Activated naive CD4-positive, alpha-beta T cell treated with anti-CD3 and anti-CD28 coated beads, Interleukin-2, amount 10 ng/mL, durations not matched to agents 7 days and 5 days (primary cell): ENCODE measurements at regions of chr19 and their contacts with region 1.

Region 1: GRCh38 chr19:45643024-45643926 is 4.1 kb upstream of the EML2 start:
- DNase-seq: peak; percentile 92
- H3K4me3 Mint-ChIP-seq: peak overlapping the region; percentile 54
- H3K27ac Mint-ChIP-seq: peak overlapping the region; percentile 97
- H3K4me1 Mint-ChIP-seq: peaks cover 65% of the 10 kb centered on the region
- H3K27me3 Mint-ChIP-seq: peaks cover 29% of the 10 kb centered on the region

Region 2: DNA sequence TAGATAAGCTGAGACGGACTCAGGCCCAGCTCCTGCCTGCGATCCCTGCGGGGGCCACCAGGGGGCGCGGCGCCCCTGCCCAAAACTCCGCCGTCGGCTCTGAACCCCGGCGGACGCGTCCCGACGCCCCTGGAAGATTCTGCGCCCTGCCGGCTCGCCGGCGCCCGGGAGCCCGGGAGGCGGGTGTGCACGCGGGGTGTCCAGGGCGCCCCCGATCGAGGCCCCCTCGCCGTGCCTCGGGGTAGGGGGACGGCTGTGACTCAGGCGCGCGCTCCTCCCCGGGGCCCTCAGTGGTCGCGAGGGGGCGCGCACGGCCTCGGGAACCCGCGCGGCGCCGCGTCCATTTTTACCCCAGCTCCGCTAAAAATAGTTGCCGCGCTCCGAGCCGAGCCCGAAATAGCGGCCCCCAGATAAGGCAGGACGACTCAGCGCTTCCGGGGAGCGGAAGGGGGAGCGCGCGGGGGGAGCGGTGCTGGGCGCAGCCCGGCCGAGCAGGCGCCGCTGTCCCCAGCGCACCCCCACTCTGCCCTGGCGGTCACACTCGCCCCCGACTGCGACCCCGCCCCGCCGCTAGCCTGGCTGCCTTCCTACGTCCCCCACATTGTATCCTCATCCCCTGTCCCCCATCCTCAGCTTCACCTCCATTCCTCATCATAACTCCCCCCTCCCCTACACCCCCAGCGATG is 203.6 kb before region 1 on chr19:
- CTCF ChIA-PET with region 1: interaction called, 14 read pairs
- DNase-seq: peak; percentile 87
- H3K4me3 Mint-ChIP-seq: peak overlapping the region; percentile 64
- H3K27ac Mint-ChIP-seq: peak overlapping the region; percentile 67
- H3K4me1 Mint-ChIP-seq: peaks cover 41% of the 10 kb centered on the region
- H3K27me3 Mint-ChIP-seq: peaks cover 21% of the 10 kb centered on the region

Region 3: DNA sequence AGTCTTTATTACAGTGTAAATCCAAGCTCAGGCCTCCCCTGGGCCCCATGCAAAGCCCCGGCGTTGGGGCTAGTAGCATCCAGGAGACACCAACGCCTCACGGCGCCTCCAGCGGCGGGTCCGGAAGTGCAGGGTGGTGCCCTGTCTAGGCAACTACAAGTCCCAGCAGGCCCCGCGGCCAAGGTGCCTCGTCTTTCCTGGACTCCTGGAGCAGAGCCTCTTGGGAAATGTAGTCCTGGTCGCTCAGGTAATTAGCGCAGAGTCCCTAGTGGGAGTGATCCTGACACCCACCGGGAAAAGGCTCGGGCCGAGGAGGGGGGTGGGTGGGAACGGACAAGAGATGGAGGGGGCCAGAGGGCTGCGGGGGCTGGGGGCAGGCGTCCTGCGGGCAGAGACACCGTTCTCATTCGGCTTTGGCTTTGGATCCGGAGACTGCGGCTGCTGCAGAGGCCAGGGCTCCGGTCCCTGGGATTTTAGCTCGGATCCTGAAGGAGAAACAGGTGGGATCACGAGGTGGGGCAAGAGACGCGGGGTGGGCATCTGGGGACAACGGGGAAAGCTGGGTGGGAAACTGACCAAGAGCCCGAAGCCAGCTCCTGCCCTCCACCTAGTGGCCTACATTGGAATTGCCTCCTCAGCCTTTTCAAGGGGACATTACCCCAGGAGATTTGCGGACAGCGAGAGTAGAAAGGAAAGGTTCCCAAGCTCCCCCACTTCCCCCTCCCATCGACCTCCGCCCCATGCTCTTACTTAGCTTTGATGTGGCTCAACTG is 157.8 kb before region 1 on chr19:
- CTCF ChIA-PET with region 1: interaction called, 12 read pairs
- DNase-seq: peak; percentile 99
- H3K4me3 Mint-ChIP-seq: peak overlapping the region; percentile 89
- H3K27ac Mint-ChIP-seq: peak overlapping the region; percentile 83
- H3K4me1 Mint-ChIP-seq: peaks cover 16% of the 10 kb centered on the region
- H3K27me3 Mint-ChIP-seq: peaks cover 31% of the 10 kb centered on the region

Region 4: DNA sequence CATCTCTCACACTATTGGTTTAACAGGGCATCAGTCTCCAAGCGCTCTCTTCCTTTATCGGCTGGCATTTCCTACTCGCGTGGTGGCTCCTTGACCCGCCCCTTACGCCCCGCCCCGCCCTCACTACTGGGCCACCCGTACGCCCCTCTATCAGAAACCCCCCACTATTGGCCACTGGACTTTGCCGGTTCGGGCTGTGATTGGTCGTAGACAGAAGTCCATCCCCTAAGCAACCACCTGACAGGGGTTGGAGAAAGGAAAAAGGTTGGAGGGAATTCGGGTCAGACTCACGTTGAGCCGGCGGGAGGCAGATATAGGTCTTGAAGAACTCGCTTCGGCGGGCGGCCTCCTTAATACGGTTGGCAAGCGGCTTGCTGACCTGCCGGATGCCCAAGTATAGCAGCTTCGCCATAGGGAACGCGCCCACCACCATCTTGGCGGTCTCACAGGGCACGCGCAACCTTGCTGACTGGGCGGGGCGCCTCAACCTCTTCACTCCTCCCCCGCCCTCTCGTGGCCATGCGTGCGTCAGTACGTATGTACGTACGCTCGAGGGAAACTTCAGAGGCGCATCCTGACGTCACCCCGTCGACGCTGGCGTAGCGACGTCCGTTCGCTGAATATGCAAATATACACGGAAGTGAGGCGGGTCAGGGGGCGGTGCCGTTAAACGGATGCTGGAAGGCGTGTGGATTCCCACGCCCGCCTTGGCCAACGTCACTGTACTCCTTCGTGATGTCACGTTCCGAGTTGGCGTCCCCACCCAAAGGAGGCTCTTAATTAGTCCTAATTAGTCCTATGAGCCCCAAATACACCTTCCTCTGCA is 58.7 kb before region 1 on chr19 and contains the start of gene OPA3:
- CTCF ChIA-PET with region 1: interaction called, 10 read pairs
- DNase-seq: peak; percentile 100
- H3K4me3 Mint-ChIP-seq: peak within 1 kb of the TSS; percentile 83
- H3K27ac Mint-ChIP-seq: peak within 1 kb of the TSS; percentile 97
- H3K4me1 Mint-ChIP-seq: peaks cover 32% of the 10 kb centered on the region
- H3K27me3 Mint-ChIP-seq: peaks cover 22% of the 10 kb centered on the region

Region 5: DNA sequence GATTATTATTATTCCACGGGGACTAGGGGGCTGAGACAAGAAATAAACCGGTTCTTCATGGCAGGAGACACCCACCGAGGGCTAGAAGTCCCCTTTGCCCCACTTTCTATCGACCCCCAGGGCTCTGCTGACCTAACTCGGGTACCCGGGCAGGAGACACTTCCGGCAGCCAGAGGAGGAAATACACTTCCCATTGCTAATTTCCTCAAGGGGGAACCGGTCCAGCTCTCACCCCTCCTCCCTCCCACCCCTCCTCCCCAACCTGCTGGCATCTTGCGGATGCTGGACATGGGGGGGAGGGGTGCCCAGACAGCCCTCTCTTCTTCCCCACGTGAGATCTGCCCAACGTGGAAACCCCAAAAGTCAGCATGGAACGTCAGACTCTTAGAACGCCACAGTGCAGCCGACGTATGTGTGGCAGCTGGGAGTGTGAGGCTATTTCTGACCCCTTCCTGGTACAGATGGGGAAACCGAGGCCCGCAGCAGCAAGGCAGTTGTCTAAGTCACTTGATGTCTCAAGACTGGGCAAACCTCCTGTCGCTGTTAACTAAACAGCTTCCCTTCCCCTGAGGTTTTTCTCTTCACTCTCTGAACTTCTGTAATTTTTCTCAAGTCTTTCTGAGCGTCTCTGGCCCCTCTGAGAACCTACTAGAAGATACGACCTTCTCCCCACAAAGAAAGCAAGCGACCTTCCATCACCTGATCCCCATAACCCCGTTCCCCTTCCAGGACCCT is 44.8 kb before region 1 on chr19:
- CTCF ChIA-PET with region 1: interaction called, 52 read pairs
- DNase-seq: no peak
- H3K4me3 Mint-ChIP-seq: no peak overlapping the region
- H3K27ac Mint-ChIP-seq: no peak overlapping the region
- H3K4me1 Mint-ChIP-seq: peaks cover 27% of the 10 kb centered on the region
- H3K27me3 Mint-ChIP-seq: peaks cover 94% of the 10 kb centered on the region

Region 6: GRCh38 chr19:45607071-45608029 is 35.9 kb before region 1 on chr19:
- CTCF ChIA-PET with region 1: interaction called, 52 read pairs
- DNase-seq: peak; percentile 59
- H3K4me3 Mint-ChIP-seq: no peak overlapping the region
- H3K27ac Mint-ChIP-seq: peak overlapping the region; percentile 75
- H3K4me1 Mint-ChIP-seq: peaks cover 10% of the 10 kb centered on the region
- H3K27me3 Mint-ChIP-seq: peaks cover 21% of the 10 kb centered on the region

Region 7: GRCh38 chr19:45613926-45614725 is 29.1 kb before region 1 on chr19:
- CTCF ChIA-PET with region 1: interaction called, 52 read pairs
- DNase-seq: peak; percentile 33
- H3K4me3 Mint-ChIP-seq: no peak overlapping the region
- H3K27ac Mint-ChIP-seq: peak overlapping the region; percentile 76
- H3K4me1 Mint-ChIP-seq: peaks cover 19% of the 10 kb centered on the region
- H3K27me3 Mint-ChIP-seq: no peaks in the 10 kb centered on the region